PC-3 (cell line): ENCODE measurements at regions of chr15 and their contacts with region 1.

Region 1: DNA sequence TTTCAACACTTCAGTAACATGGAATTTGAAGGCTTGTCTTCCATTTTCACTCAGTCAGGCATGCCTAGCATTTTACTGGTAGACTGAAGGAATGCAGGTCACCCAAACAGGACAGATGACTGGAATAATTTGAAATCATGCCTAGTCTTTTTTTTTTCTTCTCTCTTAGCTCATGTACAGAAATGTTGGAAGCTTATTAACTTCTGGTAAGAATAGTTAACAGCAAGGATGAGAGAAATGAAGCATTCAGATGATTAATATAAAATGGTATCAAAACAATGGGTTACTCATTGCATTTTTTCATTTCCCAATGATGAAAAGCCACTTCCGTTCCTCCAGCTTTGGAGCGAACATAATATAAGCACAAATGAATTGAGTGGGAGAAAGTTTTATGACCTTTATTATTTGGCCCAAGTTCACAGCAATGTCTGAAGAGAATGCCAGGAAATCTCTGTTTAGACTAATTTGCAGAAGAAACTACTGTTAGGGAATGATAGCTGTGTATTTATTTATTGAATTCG is 431.6 kb upstream of the RASGRP1 start:
- DNase-seq: peak; percentile 81
- ATAC-seq: peak; percentile 70
- H3K4me3 ChIP-seq: no peak overlapping the region
- H3K27ac ChIP-seq: 0 out of 2 replicates have a peak overlapping the region, but pooled peaks have one; percentile 13
- H3K4me1 ChIP-seq: peaks cover 17% of the 10 kb centered on the region
- H3K27me3 ChIP-seq: no peaks in the 10 kb centered on the region
- CTCF ChIP-seq: no peak

Region 2: DNA sequence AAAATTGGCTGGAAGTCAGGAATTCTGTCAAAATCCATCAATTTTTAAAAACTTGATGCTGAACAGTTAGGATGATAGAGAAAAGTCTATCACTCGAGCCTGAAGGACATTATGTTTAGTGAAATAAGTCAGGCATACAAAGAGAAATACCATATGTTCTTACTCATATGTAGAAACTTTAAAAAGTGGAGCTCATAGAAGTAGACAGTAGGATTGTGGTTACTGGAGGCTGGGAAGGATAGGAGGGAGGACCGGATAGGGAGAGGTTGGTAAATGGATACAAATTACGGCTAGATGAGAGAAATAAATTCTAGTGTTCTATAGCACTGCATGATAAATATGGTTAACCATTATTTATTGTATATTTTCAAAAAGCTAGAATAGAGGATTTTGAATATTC is 42.1 kb before region 1 on chr15:
- CTCF ChIA-PET with region 1: no interaction called
- POLR2A ChIA-PET with region 1: no interaction called
- intact Hi-C with region 1: no loop called
- DNase-seq: no peak
- ATAC-seq: no peak
- H3K4me3 ChIP-seq: no peak overlapping the region
- H3K27ac ChIP-seq: no peak overlapping the region
- H3K4me1 ChIP-seq: no peaks in the 10 kb centered on the region
- H3K27me3 ChIP-seq: no peaks in the 10 kb centered on the region
- CTCF ChIP-seq: no peak

Region 3: GRCh38 chr15:39030291-39031070 is 34.3 kb after region 1 on chr15:
- CTCF ChIA-PET with region 1: no interaction called
- POLR2A ChIA-PET with region 1: no interaction called
- intact Hi-C with region 1: loop called (anchors 2 kb)
- DNase-seq: peak; percentile 59
- ATAC-seq: peak; percentile 80
- H3K4me3 ChIP-seq: no peak overlapping the region
- H3K27ac ChIP-seq: no peak overlapping the region
- H3K4me1 ChIP-seq: peaks cover 16% of the 10 kb centered on the region
- H3K27me3 ChIP-seq: no peaks in the 10 kb centered on the region
- CTCF ChIP-seq: no peak

Region 4: DNA sequence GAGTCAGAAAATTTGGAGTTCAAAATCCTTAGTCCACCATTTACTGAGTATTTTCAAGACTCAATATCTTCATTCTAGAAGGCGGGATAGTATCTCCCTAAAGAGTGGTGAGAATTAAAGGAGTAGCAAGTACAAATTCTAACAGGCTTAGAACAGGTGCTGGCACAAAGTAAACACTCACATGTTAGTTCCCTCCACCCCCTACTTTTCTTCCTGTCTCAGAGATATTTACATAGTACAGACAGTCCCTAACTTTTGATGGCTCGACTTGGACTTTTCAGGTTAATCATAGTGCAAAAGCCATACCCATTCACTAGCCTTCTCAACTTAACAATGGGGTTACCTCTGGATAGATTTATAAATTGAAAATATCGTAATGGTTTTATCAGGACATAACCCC is 44.7 kb after region 1 on chr15:
- CTCF ChIA-PET with region 1: no interaction called
- POLR2A ChIA-PET with region 1: no interaction called
- intact Hi-C with region 1: no loop called
- DNase-seq: no peak
- ATAC-seq: no peak
- H3K4me3 ChIP-seq: no peak overlapping the region
- H3K27ac ChIP-seq: no peak overlapping the region
- H3K4me1 ChIP-seq: no peaks in the 10 kb centered on the region
- H3K27me3 ChIP-seq: no peaks in the 10 kb centered on the region
- CTCF ChIP-seq: no peak